HAP-1 (cell line): ENCODE measurements at regions of chr6 and their contacts with region 1.

Region 1: GRCh38 chr6:138115877-138116660 is 8.8 kb upstream of the PERP start:
- DNase-seq: peak; percentile 68 to 69
- H3K4me3 ChIP-seq: no peak overlapping the region
- H3K4me1 ChIP-seq: peaks cover 4% of the 10 kb centered on the region; the same call in 1 of the 2 replicates
- H3K27me3 ChIP-seq: no peaks in the 10 kb centered on the region; the same call in 1 of the 2 replicates

Region 2: GRCh38 chr6:136761227-136761922 is 1354.7 kb before region 1 on chr6:
- in situ Hi-C with region 1: no loop called
- DNase-seq: no peak
- H3K4me3 ChIP-seq: no peak overlapping the region
- H3K4me1 ChIP-seq: peaks cover 21% of the 10 kb centered on the region
- H3K27me3 ChIP-seq: no peaks in the 10 kb centered on the region

Region 3: GRCh38 chr6:138287144-138287955 is 171.3 kb after region 1 on chr6:
- in situ Hi-C with region 1: loop called (anchors 10 kb)
- DNase-seq: peak; percentile 25 to 70
- H3K4me3 ChIP-seq: no peak overlapping the region
- H3K4me1 ChIP-seq: no peaks in the 10 kb centered on the region
- H3K27me3 ChIP-seq: no peaks in the 10 kb centered on the region

Region 4: GRCh38 chr6:138410972-138411667 is 295.1 kb after region 1 on chr6:
- in situ Hi-C with region 1: loop called (anchors 10 kb)
- DNase-seq: no peak
- H3K4me3 ChIP-seq: no peak overlapping the region
- H3K4me1 ChIP-seq: peaks cover under 1% of the 10 kb centered on the region; the same call in 1 of the 2 replicates
- H3K27me3 ChIP-seq: no peaks in the 10 kb centered on the region

Region 5: DNA sequence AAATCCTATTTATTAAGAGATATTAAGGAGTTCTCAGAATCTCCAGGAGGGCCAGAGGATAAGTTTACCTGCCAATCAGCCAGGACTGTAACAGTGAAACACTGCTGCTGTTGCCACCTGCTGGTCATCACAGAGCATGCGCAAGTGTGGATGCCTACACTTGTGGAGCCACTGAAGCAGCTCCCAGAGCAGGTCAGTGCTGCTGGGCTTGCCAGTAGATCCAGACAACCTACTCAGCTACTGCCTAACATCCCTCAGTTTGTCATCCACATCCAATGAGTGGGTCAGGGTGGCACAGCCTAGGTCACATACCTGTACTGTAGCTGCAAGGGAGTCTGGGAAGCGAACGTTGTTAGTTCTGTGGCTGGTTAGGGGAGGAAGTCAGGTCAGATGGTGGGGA is 401.6 kb after region 1 on chr6:
- in situ Hi-C with region 1: loop called (anchors 5 kb)
- DNase-seq: peak in 1 of 2 experiments; percentile 60
- H3K4me3 ChIP-seq: no peak overlapping the region
- H3K4me1 ChIP-seq: peaks cover 19% of the 10 kb centered on the region
- H3K27me3 ChIP-seq: no peaks in the 10 kb centered on the region

Region 6: DNA sequence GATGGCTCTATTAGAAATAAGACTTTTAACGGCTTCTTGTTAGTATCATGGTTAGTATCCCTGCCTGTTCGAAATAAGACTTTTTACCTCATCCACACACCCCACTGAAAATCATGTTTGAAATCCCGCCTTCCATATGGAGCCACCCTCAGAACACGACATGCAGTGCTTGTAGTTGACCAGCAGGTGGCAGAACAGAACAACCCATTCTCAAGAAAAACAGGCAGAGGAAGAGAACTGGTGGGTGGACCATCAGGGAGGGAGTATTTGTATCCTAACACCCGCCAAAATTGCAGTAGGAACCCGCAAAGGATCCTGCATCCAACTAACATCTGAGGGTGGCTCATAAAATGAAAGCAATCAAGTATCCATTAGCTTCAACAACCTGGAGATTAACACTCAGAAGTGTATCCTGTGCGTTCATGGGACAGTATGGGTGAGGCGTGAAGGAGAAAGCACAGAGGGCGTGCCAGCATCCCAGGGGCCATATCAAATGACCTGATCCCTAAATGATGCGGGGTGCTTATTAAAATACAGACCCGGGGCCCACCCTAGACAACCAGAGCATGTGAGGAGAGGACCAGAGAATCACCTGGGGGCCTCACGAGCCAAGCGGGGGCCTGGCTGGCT is 472.9 kb after region 1 on chr6:
- in situ Hi-C with region 1: loop called (anchors 5 kb)
- DNase-seq: peak; percentile 76 to 77
- H3K4me3 ChIP-seq: no peak overlapping the region
- H3K4me1 ChIP-seq: peaks cover 21% of the 10 kb centered on the region
- H3K27me3 ChIP-seq: no peaks in the 10 kb centered on the region

Region 7: GRCh38 chr6:138752017-138752416 is 635.9 kb after region 1 on chr6:
- in situ Hi-C with region 1: loop called (anchors 10 kb)
- DNase-seq: peak; percentile 18 to 21
- H3K4me3 ChIP-seq: no peak overlapping the region
- H3K4me1 ChIP-seq: no peaks in the 10 kb centered on the region
- H3K27me3 ChIP-seq: no peaks in the 10 kb centered on the region